Activated CD8-positive, alpha-beta T cell treated with anti-CD3 and anti-CD28 coated beads, Interleukin-2, amount 10 ng/mL, durations not matched to agents 7 days and 5 days (primary cell): ENCODE measurements at regions of chr3 and their contacts with region 1.

Region 1: GRCh38 chr3:183766745-183767606 is 58.4 kb downstream of the MAP6D1 start:
- DNase-seq: peak; percentile 83
- ATAC-seq: peak; percentile 93
- H3K4me3 Mint-ChIP-seq: no peak overlapping the region
- H3K27ac Mint-ChIP-seq: no peak overlapping the region
- H3K4me1 Mint-ChIP-seq: peaks cover 11% of the 10 kb centered on the region
- H3K27me3 Mint-ChIP-seq: no peaks in the 10 kb centered on the region

Region 2: GRCh38 chr3:183359036-183359435 is 407.9 kb before region 1 on chr3:
- CTCF ChIA-PET with region 1: no interaction called
- POLR2A ChIA-PET with region 1: no interaction called
- DNase-seq: no peak
- ATAC-seq: no peak
- H3K4me3 Mint-ChIP-seq: no peak overlapping the region
- H3K27ac Mint-ChIP-seq: no peak overlapping the region
- H3K4me1 Mint-ChIP-seq: peaks cover 8% of the 10 kb centered on the region
- H3K27me3 Mint-ChIP-seq: no peaks in the 10 kb centered on the region

Region 3: GRCh38 chr3:183468424-183468823 is 298.6 kb before region 1 on chr3:
- CTCF ChIA-PET with region 1: interaction called, 53 read pairs
- POLR2A ChIA-PET with region 1: no interaction called
- DNase-seq: no peak
- ATAC-seq: no peak
- H3K4me3 Mint-ChIP-seq: no peak overlapping the region
- H3K27ac Mint-ChIP-seq: no peak overlapping the region
- H3K4me1 Mint-ChIP-seq: peaks cover 17% of the 10 kb centered on the region
- H3K27me3 Mint-ChIP-seq: peaks cover 3% of the 10 kb centered on the region

Region 4: GRCh38 chr3:183481582-183481981 is 285.4 kb before region 1 on chr3:
- CTCF ChIA-PET with region 1: interaction called, 14 read pairs
- POLR2A ChIA-PET with region 1: no interaction called
- DNase-seq: no peak
- ATAC-seq: no peak
- H3K4me3 Mint-ChIP-seq: no peak overlapping the region
- H3K27ac Mint-ChIP-seq: no peak overlapping the region
- H3K4me1 Mint-ChIP-seq: peaks cover 3% of the 10 kb centered on the region
- H3K27me3 Mint-ChIP-seq: no peaks in the 10 kb centered on the region

Region 5: DNA sequence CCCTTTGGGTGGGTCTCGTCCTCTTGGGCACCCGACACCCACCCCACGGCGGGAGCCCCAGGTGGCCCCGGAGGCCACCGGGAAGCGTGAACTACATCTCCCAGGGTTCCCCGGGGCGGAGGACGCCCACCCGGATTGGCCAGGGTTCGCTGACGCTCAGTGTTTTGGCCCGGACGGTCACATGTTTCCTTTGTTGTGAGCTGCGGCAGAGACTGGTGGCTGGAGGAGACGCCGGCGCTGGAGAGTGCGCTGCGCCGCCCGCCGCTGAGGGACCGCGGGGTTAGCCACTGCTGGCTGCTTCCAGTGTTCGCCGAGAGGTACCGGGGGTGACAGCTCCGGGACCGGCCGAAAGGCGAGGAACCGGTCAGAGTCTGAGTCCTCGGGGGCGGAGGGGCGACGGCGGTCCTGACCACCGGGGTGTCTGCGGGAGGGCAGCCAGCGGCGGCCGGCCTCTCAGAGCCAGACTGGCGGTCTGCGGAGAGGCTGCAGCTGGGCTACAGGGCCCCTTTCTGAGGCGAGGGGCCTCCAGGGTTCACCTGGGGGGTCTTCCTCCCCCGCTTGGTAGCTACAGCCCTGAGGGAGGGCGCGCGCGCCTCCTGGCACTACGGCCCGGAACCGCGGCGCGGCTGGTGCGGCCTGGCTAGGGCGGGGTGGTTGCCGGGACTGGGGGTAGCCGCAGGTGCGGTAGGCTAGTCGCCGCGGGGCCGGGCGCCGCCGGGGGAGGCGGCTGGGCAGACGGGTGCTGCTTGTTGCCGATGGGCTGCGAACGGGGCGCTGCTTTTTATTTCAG is 131.3 kb before region 1 on chr3 and contains the start of gene KLHL24:
- CTCF ChIA-PET with region 1: interaction called, 10 read pairs
- POLR2A ChIA-PET with region 1: no interaction called
- DNase-seq: peak; percentile 94
- ATAC-seq: peak; percentile 82
- H3K4me3 Mint-ChIP-seq: peak within 1 kb of the TSS; percentile 90
- H3K27ac Mint-ChIP-seq: peak within 1 kb of the TSS; percentile 92
- H3K4me1 Mint-ChIP-seq: peaks cover 26% of the 10 kb centered on the region
- H3K27me3 Mint-ChIP-seq: no peaks in the 10 kb centered on the region
- total RNA-seq, gene KLHL24: 8.0 to 9.2 TPM

Region 6: GRCh38 chr3:183743231-183743630 is 23.7 kb before region 1 on chr3:
- CTCF ChIA-PET with region 1: no interaction called
- POLR2A ChIA-PET with region 1: no interaction called
- DNase-seq: no peak
- ATAC-seq: no peak
- H3K4me3 Mint-ChIP-seq: no peak overlapping the region
- H3K27ac Mint-ChIP-seq: no peak overlapping the region
- H3K4me1 Mint-ChIP-seq: no peaks in the 10 kb centered on the region
- H3K27me3 Mint-ChIP-seq: no peaks in the 10 kb centered on the region

Region 7: DNA sequence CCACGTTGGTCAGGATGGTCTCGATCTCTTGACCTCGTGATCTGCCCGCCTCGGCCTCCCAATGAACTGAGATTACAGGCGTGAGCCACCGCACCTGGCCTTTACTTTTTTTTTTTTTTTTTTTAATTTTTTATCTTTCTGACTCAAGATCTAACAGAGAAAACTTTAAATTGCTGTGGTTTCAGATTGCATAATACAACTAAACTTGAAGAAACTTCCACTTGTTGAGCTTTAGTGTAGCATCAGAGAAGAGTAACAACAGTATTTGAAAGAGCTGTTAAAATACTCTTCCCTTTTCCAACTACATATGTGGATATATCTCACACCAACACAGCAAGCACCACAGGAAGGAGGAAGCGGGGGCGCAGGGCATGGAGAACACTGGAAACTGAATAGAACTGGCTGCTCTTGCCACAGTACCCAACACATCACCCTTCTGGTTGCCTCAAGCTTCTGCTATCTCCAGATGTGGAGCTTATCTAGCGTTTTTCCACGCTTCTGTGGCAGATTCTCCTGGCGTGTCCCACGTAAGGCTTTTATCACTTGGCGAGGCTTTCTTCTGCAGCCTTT is 13.0 kb after region 1 on chr3:
- CTCF ChIA-PET with region 1: interaction called, 14 read pairs
- POLR2A ChIA-PET with region 1: no interaction called
- DNase-seq: no peak
- ATAC-seq: no peak
- H3K4me3 Mint-ChIP-seq: no peak overlapping the region
- H3K27ac Mint-ChIP-seq: no peak overlapping the region
- H3K4me1 Mint-ChIP-seq: no peaks in the 10 kb centered on the region
- H3K27me3 Mint-ChIP-seq: no peaks in the 10 kb centered on the region

Region 8: DNA sequence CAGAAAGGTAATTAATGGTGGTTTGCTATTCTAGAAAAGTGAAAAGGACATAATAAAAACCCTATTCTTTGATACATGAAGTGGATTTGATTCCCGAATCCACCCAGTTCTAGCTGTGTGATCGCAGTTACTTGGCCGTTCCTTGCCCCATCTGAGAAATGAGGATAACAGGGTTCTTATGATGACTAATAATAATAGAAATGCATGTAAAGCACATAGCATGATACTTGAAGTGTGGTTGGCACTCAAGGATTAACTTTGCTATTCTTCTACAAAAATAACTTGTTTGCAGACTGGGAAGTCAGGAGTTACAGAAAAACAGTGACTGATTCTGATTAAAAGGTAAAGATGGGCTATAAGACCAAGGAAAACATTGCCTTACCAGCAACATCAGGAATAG is 90.9 kb after region 1 on chr3:
- CTCF ChIA-PET with region 1: no interaction called
- POLR2A ChIA-PET with region 1: no interaction called
- DNase-seq: no peak
- ATAC-seq: no peak
- H3K4me3 Mint-ChIP-seq: no peak overlapping the region
- H3K27ac Mint-ChIP-seq: no peak overlapping the region
- H3K4me1 Mint-ChIP-seq: no peaks in the 10 kb centered on the region
- H3K27me3 Mint-ChIP-seq: no peaks in the 10 kb centered on the region